ENCODE measurements at regions of chr10 and their contacts with region 1.

Region 1: DNA sequence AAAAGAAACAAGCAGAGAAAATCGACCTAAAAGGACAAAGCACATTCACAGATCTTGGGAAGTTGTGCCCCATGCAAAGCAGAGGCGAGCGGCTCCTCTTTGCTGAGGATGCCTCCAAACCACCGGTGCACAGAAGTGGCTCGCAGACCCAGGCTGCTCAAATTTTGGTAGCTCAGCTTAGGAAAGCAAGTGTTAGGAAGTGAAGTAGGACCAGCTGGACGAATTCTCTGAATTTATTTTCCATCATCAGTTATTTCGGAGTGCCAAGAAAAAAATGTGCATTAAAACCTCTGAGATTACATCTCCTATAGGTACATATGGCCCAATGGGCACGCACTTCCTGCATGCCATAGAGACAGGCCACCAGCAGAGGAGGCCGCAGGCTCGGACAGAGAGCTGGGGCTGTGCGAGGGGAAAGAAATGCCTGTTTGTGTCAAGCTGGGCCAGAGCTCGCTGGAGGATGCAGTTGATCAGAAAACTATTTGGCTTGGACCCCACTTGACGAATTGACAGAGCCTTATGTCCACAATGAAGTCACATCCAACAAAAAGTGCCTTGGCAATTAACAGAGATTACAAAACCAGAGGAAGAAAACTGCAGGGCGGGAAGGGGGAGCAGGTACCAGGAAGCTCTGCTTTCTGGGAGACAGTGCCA is 122.3 kb upstream of the LYZL2 start:
- DNase-seq: peak; percentile 78
- ATAC-seq: peak; percentile 94
- H3K4me3 ChIP-seq: no peak overlapping the region
- H3K27ac ChIP-seq: no peak overlapping the region
- H3K4me1 ChIP-seq: no peaks in the 10 kb centered on the region
- H3K27me3 ChIP-seq: no peaks in the 10 kb centered on the region
- CTCF ChIP-seq: peak; percentile 91

Region 2: DNA sequence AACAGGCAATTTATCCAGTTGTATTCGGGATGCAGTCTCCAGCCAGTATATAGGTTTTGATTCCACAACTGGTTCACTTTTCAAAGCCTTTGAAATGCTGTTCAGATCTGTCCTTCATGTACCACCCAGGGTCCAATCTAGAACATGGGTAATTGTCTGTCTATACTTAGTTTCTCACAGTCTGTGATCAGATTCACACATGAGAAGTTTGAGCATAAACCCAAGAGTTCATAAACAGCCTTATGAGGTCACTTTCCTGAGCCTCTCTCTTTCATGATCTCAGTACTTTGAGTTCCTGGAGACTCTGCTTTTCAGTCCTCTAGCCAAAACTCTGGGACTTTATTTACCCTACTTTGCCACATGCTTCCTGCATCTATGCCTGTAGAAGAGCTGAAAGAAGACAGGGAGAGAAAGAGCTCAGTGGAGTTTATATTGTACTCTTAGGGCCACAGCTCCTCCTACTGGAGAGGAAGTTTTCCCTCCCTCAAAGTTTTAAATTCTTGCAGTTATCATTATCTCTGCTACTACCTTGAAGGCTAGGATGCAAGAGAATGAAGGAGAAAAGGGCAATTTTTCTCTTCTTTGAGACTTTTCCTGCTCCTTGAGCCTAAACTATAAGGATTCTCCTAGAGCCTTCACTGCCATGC is 739.2 kb after region 1 on chr10:
- CTCF ChIA-PET with region 1: interaction called, 7 read pairs
- POLR2A ChIA-PET with region 1: no interaction called
- intact Hi-C with region 1: loop called (anchors 2 kb)
- DNase-seq: peak; percentile 67
- ATAC-seq: 0 out of 2 replicates have a peak, but pooled peaks have one; percentile 46
- H3K4me3 ChIP-seq: no peak overlapping the region
- H3K27ac ChIP-seq: no peak overlapping the region
- H3K4me1 ChIP-seq: no peaks in the 10 kb centered on the region
- H3K27me3 ChIP-seq: no peaks in the 10 kb centered on the region
- CTCF ChIP-seq: peak; percentile 73

Region 3: GRCh38 chr10:31515819-31516402 is 764.1 kb after region 1 on chr10:
- CTCF ChIA-PET with region 1: no interaction called
- POLR2A ChIA-PET with region 1: no interaction called
- intact Hi-C with region 1: no loop called
- DNase-seq: peak; percentile 35
- ATAC-seq: peak; percentile 31
- H3K4me3 ChIP-seq: no peak overlapping the region
- H3K27ac ChIP-seq: no peak overlapping the region
- H3K4me1 ChIP-seq: peaks cover 9% of the 10 kb centered on the region; the same call in 1 of the 2 replicates
- H3K27me3 ChIP-seq: no peaks in the 10 kb centered on the region
- CTCF ChIP-seq: no peak